ENCODE measurements at regions of chr10 and their contacts with region 1.

Region 1: GRCh38 chr10:61750929-61751471 is 88.3 kb downstream of the CABCOCO1 start:
- DNase-seq: peak; percentile 93 to 94
- H3K4me3 ChIP-seq: no peak overlapping the region
- H3K4me3 Mint-ChIP-seq: peak overlapping the region; percentile 27
- H3K27ac Mint-ChIP-seq: peak overlapping the region; percentile 83
- H3K4me1 ChIP-seq: peaks cover 65% of the 10 kb centered on the region
- H3K4me1 Mint-ChIP-seq: peaks cover 54% of the 10 kb centered on the region
- H3K27me3 ChIP-seq: no peaks in the 10 kb centered on the region
- H3K27me3 Mint-ChIP-seq: no peaks in the 10 kb centered on the region
- CTCF ChIP-seq: peak; percentile 92 to 98

Region 2: GRCh38 chr10:61592581-61592980 is 158.4 kb before region 1 on chr10:
- CTCF ChIA-PET with region 1: no interaction called
- POLR2A ChIA-PET with region 1: no interaction called
- intact Hi-C with region 1: no loop called
- DNase-seq: peak; percentile 70
- H3K4me3 ChIP-seq: no peak overlapping the region
- H3K4me3 Mint-ChIP-seq: no peak overlapping the region
- H3K27ac Mint-ChIP-seq: no peak overlapping the region
- H3K4me1 ChIP-seq: no peaks in the 10 kb centered on the region
- H3K4me1 Mint-ChIP-seq: peaks cover 6% of the 10 kb centered on the region
- H3K27me3 ChIP-seq: 0 out of 2 replicates have a peak, but pooled peaks cover 1% of the 10 kb centered on the region
- H3K27me3 Mint-ChIP-seq: peaks cover 21% of the 10 kb centered on the region
- CTCF ChIP-seq: peak; percentile 81 to 88

Region 3: DNA sequence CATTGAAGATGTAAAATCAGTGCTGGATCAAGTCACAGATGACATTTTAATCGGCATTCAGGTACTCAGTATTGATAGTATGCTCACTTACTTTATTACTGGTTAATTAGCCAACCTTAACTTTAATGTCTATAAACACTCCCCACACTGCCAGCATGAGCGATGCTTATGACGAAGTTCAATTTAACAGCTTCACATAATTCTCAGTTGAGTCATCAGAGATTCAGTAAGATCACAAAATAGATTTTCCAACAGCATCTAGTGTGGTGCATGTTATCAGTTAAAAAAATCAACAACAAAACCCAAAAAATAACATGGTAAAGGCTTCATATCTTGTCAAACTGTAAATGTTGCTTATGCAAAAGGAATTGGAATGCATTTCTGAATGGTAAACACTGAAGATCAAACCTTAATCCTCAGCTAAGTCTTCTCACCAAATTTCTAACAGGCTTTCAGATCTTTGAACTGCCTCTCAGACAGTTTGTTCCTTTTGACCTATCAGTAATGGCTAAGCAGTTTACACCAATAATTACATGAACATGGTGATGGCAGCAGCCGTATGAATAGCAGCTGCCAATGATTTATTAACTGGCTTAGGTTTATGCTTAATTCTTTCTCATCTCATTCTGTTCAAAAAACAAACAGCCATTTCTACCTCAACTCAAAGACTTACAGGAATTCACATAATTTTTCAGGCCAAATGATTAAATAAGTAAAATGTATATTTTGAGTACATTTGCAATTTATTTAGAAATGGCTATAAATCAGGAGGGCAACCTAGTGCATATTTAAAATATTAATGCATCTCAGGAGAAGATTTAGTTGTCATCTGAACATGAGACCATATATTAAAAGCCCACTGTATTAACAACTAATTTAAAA is 10.2 kb after region 1 on chr10:
- CTCF ChIA-PET with region 1: interaction called, 17 read pairs
- POLR2A ChIA-PET with region 1: no interaction called
- intact Hi-C with region 1: no loop called
- DNase-seq: no peak
- H3K4me3 ChIP-seq: no peak overlapping the region
- H3K4me3 Mint-ChIP-seq: no peak overlapping the region
- H3K27ac Mint-ChIP-seq: peak overlapping the region; percentile 39
- H3K4me1 ChIP-seq: peaks cover 23% of the 10 kb centered on the region
- H3K4me1 Mint-ChIP-seq: peaks cover 18% of the 10 kb centered on the region
- H3K27me3 ChIP-seq: no peaks in the 10 kb centered on the region
- H3K27me3 Mint-ChIP-seq: no peaks in the 10 kb centered on the region
- CTCF ChIP-seq: no peak

Region 4: GRCh38 chr10:61830072-61830845 is 79.3 kb after region 1 on chr10:
- CTCF ChIA-PET with region 1: interaction called, 132 read pairs
- POLR2A ChIA-PET with region 1: interaction called, 7 read pairs
- intact Hi-C with region 1: loop called (anchors 1 kb)
- DNase-seq: no peak
- H3K4me3 ChIP-seq: peak overlapping the region; percentile 19
- H3K4me3 Mint-ChIP-seq: peak overlapping the region; percentile 49
- H3K27ac Mint-ChIP-seq: peak overlapping the region; percentile 83
- H3K4me1 ChIP-seq: peaks cover 47% of the 10 kb centered on the region
- H3K4me1 Mint-ChIP-seq: peaks cover 41% of the 10 kb centered on the region
- H3K27me3 ChIP-seq: no peaks in the 10 kb centered on the region
- H3K27me3 Mint-ChIP-seq: no peaks in the 10 kb centered on the region
- CTCF ChIP-seq: no peak

Region 5: DNA sequence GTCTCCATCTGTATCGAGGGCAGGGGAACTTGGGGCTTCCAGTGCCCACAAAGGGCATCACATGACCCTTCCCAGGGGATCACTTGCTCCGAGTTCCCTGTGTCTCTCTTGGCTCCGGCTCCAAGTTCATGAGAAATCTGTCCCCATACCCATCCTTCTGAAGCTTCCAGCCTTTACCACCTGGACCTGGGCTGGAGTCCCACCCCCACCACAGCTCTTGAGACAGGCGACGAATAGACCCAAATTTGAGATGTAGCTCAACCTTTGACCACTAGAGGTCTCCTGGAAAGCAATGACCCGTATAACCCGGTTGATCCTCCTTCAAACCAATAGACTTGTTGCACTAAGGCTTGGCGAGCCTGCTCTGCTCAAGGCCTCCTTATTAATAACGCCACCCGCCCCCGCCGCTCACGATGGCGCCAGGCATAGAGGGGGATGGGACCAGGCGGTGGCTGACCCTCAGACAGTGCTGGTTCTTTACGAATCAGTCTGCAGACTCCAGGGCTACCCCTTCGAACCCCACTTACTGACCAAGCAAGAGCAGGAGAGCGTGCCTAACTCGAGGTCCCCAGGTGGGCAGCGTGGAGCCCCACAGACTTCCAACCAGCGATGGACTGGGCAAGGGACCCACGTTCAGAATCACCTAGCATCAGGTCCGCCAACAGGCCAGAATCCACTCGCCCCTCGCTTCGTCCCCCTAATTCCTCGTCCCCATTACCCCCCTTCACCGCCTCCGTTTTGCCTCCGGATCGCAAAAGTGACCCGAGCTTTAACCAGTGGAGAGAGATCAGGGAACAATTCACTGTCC is 146.1 kb after region 1 on chr10:
- CTCF ChIA-PET with region 1: interaction called, 24 read pairs
- POLR2A ChIA-PET with region 1: interaction called, 9 read pairs
- intact Hi-C with region 1: loop called (anchors 1 kb)
- DNase-seq: peak; percentile 78 to 83
- H3K4me3 ChIP-seq: no peak overlapping the region
- H3K4me3 Mint-ChIP-seq: no peak overlapping the region
- H3K27ac Mint-ChIP-seq: peak overlapping the region; percentile 99
- H3K4me1 ChIP-seq: peaks cover 42% of the 10 kb centered on the region
- H3K4me1 Mint-ChIP-seq: peaks cover 32% of the 10 kb centered on the region
- H3K27me3 ChIP-seq: no peaks in the 10 kb centered on the region
- H3K27me3 Mint-ChIP-seq: no peaks in the 10 kb centered on the region
- CTCF ChIP-seq: peak; percentile 71 to 88

Region 6: DNA sequence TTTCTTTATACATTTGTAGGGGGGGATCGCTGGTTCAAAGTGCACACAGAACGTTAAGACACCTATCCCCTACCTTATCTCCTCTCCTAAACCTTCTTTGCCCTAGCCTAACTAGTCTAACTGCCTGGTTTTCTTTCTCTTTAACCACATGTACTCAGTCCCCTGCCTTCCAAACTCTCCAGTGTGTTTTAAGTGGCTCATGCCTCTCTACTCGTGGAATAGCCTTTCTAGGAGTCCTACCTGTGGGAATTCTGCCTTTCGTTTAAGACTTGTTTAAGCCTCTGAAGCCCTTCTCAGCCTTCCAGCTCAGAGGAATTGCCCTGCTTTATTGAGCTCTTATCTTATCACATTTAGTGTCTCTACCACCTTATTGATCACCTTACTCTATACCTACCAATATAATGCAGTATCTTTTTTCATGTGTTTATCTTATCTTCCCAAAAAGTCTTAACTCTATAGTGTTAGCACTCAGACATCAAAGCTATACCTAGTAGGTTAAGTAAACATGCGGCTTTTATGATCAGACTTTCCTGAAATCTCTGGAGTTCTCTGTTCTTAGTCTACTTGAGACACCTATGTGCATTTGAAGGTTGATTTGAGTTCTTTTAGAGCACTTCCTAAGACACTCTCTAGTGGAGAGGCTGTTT is 201.2 kb after region 1 on chr10:
- CTCF ChIA-PET with region 1: no interaction called
- POLR2A ChIA-PET with region 1: interaction called, 5 read pairs
- intact Hi-C with region 1: loop called (anchors 1 kb)
- DNase-seq: peak; percentile 87 to 89
- H3K4me3 ChIP-seq: no peak overlapping the region
- H3K4me3 Mint-ChIP-seq: peak overlapping the region; percentile 60
- H3K27ac Mint-ChIP-seq: peak overlapping the region; percentile 67
- H3K4me1 ChIP-seq: peaks cover 54% of the 10 kb centered on the region
- H3K4me1 Mint-ChIP-seq: peaks cover 47% of the 10 kb centered on the region
- H3K27me3 ChIP-seq: no peaks in the 10 kb centered on the region
- H3K27me3 Mint-ChIP-seq: no peaks in the 10 kb centered on the region
- CTCF ChIP-seq: no peak

Region 7: DNA sequence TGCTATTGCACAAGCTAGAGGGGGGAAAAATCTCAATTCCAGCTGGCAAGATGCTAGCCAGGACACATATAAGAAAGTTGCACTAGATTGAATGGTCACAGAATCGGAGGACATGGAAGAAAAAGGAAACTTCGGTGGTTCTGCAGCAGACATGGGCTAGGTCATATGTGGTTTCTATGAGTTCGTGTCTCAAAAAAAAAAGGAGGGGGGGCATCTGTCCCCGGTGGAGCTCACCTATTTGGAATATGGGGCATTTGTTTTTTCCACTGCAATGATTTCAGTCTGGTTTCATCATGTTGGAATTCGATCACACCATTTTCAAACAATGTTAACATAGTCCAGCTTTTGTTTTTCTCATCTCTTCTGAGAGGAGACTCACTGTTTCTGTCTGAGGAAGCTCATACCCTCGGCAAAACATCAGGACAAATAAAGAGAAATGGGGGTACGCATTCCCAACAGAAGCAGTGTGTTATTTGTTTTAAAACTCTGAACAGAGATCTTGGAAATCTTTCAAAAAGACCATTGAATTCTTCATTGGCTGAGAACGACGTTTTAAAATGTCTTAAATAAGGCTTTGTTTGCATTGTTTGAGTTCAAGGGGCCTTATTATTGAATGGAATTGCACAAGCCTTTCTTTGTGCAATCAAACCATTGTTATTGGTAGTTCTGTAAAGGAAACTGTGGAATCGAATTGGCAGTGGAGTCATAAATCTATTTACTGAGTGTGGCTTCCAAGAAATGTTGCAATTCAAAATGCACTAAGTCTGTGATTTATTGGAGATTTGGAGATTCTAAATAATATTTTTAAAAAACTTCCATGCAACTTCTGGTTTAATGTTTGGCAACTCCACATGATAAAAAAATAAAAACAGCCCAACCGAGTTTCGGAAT is 344.4 kb after region 1 on chr10:
- CTCF ChIA-PET with region 1: no interaction called
- POLR2A ChIA-PET with region 1: interaction called, 3 read pairs
- intact Hi-C with region 1: loop called (anchors 1 kb)
- DNase-seq: peak in 1 of 2 experiments; percentile 82
- H3K4me3 ChIP-seq: no peak overlapping the region
- H3K4me3 Mint-ChIP-seq: peak overlapping the region; percentile 35
- H3K27ac Mint-ChIP-seq: peak overlapping the region; percentile 88
- H3K4me1 ChIP-seq: peaks cover 84% of the 10 kb centered on the region
- H3K4me1 Mint-ChIP-seq: peaks cover 70% of the 10 kb centered on the region
- H3K27me3 ChIP-seq: no peaks in the 10 kb centered on the region
- H3K27me3 Mint-ChIP-seq: no peaks in the 10 kb centered on the region
- CTCF ChIP-seq: no peak

Measured in Caco-2 (cell line).